Activated CD4-positive, alpha-beta T cell treated with anti-CD3 and anti-CD28 coated beads, Interleukin-2, amount 10 ng/mL, durations not matched to agents 24 days and 14 days (primary cell): ENCODE measurements at regions of chr15 and their contacts with region 1.

Region 1: DNA sequence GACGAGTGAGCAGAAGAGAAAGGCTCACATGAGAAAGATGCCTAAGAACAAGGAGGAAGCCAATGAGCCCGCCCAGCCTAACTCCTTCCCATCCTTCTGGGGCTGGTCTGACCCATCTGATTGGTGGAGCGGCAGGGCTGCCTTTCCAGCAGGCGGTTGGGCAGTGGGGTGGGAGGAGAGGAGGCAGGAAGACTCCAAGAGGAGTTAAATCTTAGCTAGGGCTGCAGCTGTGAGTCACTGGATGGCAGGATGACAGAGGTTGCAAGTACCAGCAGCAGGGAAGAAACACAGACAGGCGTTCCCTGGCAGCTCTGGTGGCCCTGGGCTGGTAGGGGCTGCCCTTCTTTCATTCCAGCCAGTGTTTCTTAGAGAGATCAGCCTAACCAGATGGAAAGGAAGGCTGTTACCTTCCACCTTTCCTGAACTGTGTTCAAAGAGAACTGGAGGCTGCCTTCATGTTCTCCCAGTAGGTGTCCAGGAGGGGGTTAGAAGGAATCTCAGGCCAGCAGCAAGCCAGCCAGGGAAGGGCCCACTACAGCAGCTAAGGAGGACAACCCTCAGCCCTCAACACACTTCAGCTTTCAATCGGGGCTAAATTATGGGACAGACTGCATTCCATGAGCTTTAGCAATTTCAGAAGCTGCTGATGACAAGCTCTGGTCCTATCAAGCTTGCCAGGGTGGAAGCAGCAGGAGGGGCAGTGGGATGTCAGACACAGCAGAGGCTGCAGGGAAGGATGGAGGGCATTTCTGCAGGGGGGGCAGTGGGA is 50.3 kb downstream of the CHSY1 start:
- DNase-seq: peak; percentile 73
- H3K4me3 Mint-ChIP-seq: peak overlapping the region; percentile 67
- H3K27ac Mint-ChIP-seq: peak overlapping the region; percentile 96
- H3K4me1 Mint-ChIP-seq: peaks cover 82% of the 10 kb centered on the region
- H3K27me3 Mint-ChIP-seq: no peaks in the 10 kb centered on the region

Region 2: DNA sequence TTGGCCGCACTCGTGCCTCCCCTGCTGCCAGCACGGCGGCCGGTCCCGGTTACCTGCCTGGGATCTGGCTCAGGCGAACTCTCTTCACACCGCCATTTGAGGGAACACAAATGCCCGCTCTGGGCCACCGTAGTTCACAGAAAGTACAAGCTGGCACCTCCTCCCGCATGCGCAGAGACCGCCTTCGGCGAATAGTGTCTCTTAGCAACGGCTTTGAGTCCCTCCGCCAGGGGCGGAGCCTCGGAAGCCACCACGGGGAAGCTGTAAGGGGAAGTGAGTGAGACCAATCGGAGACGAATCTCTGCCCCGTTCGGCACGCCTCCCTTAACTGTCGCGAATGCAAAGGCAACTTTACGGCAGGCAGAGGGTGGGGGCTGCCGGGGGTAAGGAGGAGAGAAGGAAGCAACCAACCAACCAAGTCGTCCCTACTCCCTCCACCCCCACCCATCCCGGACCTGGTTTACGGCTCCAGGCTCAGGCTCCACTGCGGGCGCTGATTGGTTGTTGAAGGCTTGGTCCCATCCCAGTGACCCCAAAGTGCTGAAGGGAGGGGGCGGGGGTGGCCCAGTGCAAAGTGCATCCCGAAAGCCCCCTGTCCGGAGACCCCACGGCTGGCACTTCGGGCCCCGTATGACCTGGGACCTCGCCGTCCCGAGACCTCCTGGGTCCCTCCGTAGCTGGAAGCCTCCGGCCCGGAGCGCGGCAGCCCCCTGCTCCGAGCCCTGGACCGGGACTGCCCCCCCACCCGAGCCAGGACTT is 599.3 kb before region 1 on chr15 and contains the starts of genes ASB7 and LINS1:
- intact Hi-C with region 1: loop called (anchors 5 kb)
- DNase-seq: peak; percentile 100
- H3K4me3 Mint-ChIP-seq: no peak within 1 kb of the TSS
- H3K27ac Mint-ChIP-seq: no peak within 1 kb of the TSS
- H3K4me1 Mint-ChIP-seq: peaks cover 54% of the 10 kb centered on the region
- H3K27me3 Mint-ChIP-seq: no peaks in the 10 kb centered on the region
- total RNA-seq, gene ASB7: 17.8 and 18.0 TPM in 2 replicates
- total RNA-seq, gene LINS1: 63.9 and 64.9 TPM in 2 replicates

Region 3: GRCh38 chr15:101127506-101128076 is 74.0 kb before region 1 on chr15:
- intact Hi-C with region 1: loop called (anchors 1 kb)
- DNase-seq: peak; percentile 86
- H3K4me3 Mint-ChIP-seq: peak overlapping the region; percentile 77
- H3K27ac Mint-ChIP-seq: peak overlapping the region; percentile 93
- H3K4me1 Mint-ChIP-seq: peaks cover 61% of the 10 kb centered on the region
- H3K27me3 Mint-ChIP-seq: peaks cover 5% of the 10 kb centered on the region

Region 4: GRCh38 chr15:101167753-101168463 is 33.7 kb before region 1 on chr15:
- intact Hi-C with region 1: loop called (anchors 1 kb)
- DNase-seq: peak; percentile 93
- H3K4me3 Mint-ChIP-seq: peak overlapping the region; percentile 80
- H3K27ac Mint-ChIP-seq: peak overlapping the region; percentile 96
- H3K4me1 Mint-ChIP-seq: peaks cover 43% of the 10 kb centered on the region
- H3K27me3 Mint-ChIP-seq: no peaks in the 10 kb centered on the region

Region 5: GRCh38 chr15:101225658-101226057 is 24.1 kb after region 1 on chr15:
- intact Hi-C with region 1: loop called (anchors 2 kb)
- DNase-seq: no peak
- H3K4me3 Mint-ChIP-seq: no peak overlapping the region
- H3K27ac Mint-ChIP-seq: peak overlapping the region; percentile 26
- H3K4me1 Mint-ChIP-seq: peaks cover 51% of the 10 kb centered on the region
- H3K27me3 Mint-ChIP-seq: no peaks in the 10 kb centered on the region

Region 6: GRCh38 chr15:101251830-101252820 is 50.5 kb after region 1 on chr15 and contains the start of gene CHSY1:
- intact Hi-C with region 1: no loop called
- DNase-seq: peak; percentile 97
- H3K4me3 Mint-ChIP-seq: peak within 1 kb of the TSS; percentile 91
- H3K27ac Mint-ChIP-seq: peak within 1 kb of the TSS; percentile 93
- H3K4me1 Mint-ChIP-seq: peaks cover 57% of the 10 kb centered on the region
- H3K27me3 Mint-ChIP-seq: no peaks in the 10 kb centered on the region
- total RNA-seq, gene CHSY1: 61.7 and 62.6 TPM in 2 replicates

Region 7: GRCh38 chr15:101463289-101463688 is 261.7 kb after region 1 on chr15:
- intact Hi-C with region 1: loop called (anchors 1 kb)
- DNase-seq: no peak
- H3K4me3 Mint-ChIP-seq: no peak overlapping the region
- H3K27ac Mint-ChIP-seq: no peak overlapping the region
- H3K4me1 Mint-ChIP-seq: peaks cover 30% of the 10 kb centered on the region
- H3K27me3 Mint-ChIP-seq: no peaks in the 10 kb centered on the region